Naive thymus-derived CD4-positive, alpha-beta T cell (primary cell): ENCODE measurements at regions of chr19 and their contacts with region 1.

Region 1: GRCh38 chr19:51226067-51226466 is 1.2 kb downstream of the CD33 start:
- DNase-seq: no peak
- ATAC-seq: no peak
- H3K4me3 ChIP-seq: no peak overlapping the region
- H3K4me3 Mint-ChIP-seq: peak overlapping the region in 1 of 10 donors; percentile 73
- H3K27ac ChIP-seq: no peak overlapping the region
- H3K27ac Mint-ChIP-seq: peak overlapping the region in 1 of 9 donors; percentile 81
- H3K4me1 ChIP-seq: no peaks in the 10 kb centered on the region
- H3K4me1 Mint-ChIP-seq: peaks cover 0 to 38% (median 0%) of the 10 kb centered on the region in 7 donors
- H3K27me3 ChIP-seq: no peaks in the 10 kb centered on the region
- H3K27me3 Mint-ChIP-seq: peaks cover 40 to 73% (median 48%) of the 10 kb centered on the region in 5 donors

Region 2: GRCh38 chr19:51203916-51204315 is 22.2 kb before region 1 on chr19:
- CTCF ChIA-PET with region 1: no interaction called
- POLR2A ChIA-PET with region 1: no interaction called
- intact Hi-C with region 1: no loop called
- DNase-seq: no peak
- ATAC-seq: no peak
- H3K4me3 ChIP-seq: no peak overlapping the region
- H3K4me3 Mint-ChIP-seq: no peak overlapping the region
- H3K27ac ChIP-seq: no peak overlapping the region
- H3K27ac Mint-ChIP-seq: no peak overlapping the region
- H3K4me1 ChIP-seq: no peaks in the 10 kb centered on the region
- H3K4me1 Mint-ChIP-seq: peaks cover 0 to 9% (median 0%) of the 10 kb centered on the region in 7 donors
- H3K27me3 ChIP-seq: no peaks in the 10 kb centered on the region
- H3K27me3 Mint-ChIP-seq: peaks cover 23 to 35% (median 28%) of the 10 kb centered on the region in 5 donors

Region 3: DNA sequence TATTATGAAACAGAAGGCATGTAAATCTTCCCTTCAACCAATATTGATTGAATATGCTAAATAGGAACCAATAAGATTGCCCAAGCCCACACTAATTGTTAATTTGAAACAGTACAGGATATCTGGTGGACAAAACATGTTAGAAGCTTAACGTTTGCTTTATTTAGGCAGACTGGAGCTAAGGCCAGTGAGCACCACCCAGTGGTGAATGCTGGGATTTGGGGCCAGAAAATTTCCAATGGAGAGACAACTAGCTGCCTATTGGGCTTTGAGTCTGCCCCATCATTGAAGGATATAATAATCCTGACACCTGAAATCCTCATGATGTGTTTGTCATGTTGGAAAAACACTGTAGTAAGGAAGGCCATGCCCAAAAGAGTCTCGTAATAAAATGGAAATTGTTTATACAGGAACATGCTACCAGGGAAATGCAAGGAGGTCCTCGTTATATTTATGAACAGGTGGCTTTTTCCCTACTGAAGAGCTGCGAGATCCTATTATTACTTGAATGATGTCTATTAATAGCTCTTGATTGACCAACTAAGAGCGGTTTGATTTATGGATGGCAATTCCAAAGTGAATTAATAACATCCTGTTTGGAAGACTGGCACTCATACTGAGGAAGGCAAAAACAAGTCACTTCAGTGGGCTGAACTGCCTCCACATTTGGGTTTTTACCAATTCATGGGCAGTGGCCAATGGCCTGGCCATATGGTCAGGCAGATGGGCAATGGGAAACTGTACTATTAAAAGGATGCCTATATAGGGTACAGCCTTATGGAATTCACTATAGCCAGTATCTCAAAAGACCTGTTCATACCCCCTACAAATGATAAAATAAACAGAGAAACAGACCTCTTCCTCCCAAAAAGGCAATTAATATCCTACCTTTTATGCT is 33.5 kb after region 1 on chr19:
- CTCF ChIA-PET with region 1: no interaction called
- POLR2A ChIA-PET with region 1: no interaction called
- intact Hi-C with region 1: loop called in 1 of 2 experiments (anchors 2 kb)
- DNase-seq: peak in 6 of 9 donors; percentile 1 to 43 (median 8)
- ATAC-seq: peak; percentile 58
- H3K4me3 ChIP-seq: no peak overlapping the region
- H3K4me3 Mint-ChIP-seq: no peak overlapping the region
- H3K27ac ChIP-seq: no peak overlapping the region
- H3K27ac Mint-ChIP-seq: no peak overlapping the region
- H3K4me1 ChIP-seq: no peaks in the 10 kb centered on the region
- H3K4me1 Mint-ChIP-seq: peaks cover 0 to 38% (median 0%) of the 10 kb centered on the region in 7 donors
- H3K27me3 ChIP-seq: peaks cover 0 to 2% of the 10 kb centered on the region in 2 donors
- H3K27me3 Mint-ChIP-seq: peaks cover 16 to 50% (median 32%) of the 10 kb centered on the region in 5 donors